Sigmoid colon (tissue), 7 donors: ENCODE measurements at regions of chr11 and their contacts with region 1.

Region 1: GRCh38 chr11:1837171-1838076 is 1.4 kb upstream of the TNNI2 start:
- DNase-seq: peak; percentile 82
- H3K4me3 ChIP-seq: no peak overlapping the region
- H3K27ac ChIP-seq: no peak overlapping the region
- H3K4me1 ChIP-seq: peaks cover 0 to 12% (median 11%) of the 10 kb centered on the region in 4 donors
- H3K27me3 ChIP-seq: no peaks in the 10 kb centered on the region
- CTCF ChIP-seq: peak; percentile 85 to 91 (median 86)
- EP300 ChIP-seq: no peak
- POLR2A ChIP-seq: no peak

Region 2: GRCh38 chr11:1792461-1792860 is 45.0 kb before region 1 on chr11:
- intact Hi-C with region 1: no loop called
- DNase-seq: no peak
- H3K4me3 ChIP-seq: no peak overlapping the region
- H3K27ac ChIP-seq: no peak overlapping the region
- H3K4me1 ChIP-seq: no peaks in the 10 kb centered on the region
- H3K27me3 ChIP-seq: peaks cover 0 to 17% (median 8%) of the 10 kb centered on the region in 3 donors
- CTCF ChIP-seq: no peak
- EP300 ChIP-seq: no peak
- POLR2A ChIP-seq: no peak

Region 3: GRCh38 chr11:1882519-1883238 is 45.3 kb after region 1 on chr11:
- intact Hi-C with region 1: loop called (anchors 5 kb)
- DNase-seq: peak; percentile 91
- H3K4me3 ChIP-seq: no peak overlapping the region
- H3K27ac ChIP-seq: peak overlapping the region in 3 of 4 donors; percentile 65 to 78 (median 66)
- H3K4me1 ChIP-seq: peaks cover 0 to 31% (median 27%) of the 10 kb centered on the region in 4 donors
- H3K27me3 ChIP-seq: no peaks in the 10 kb centered on the region
- CTCF ChIP-seq: peak; percentile 65 to 86 (median 74)
- EP300 ChIP-seq: no peak
- POLR2A ChIP-seq: no peak

Region 4: DNA sequence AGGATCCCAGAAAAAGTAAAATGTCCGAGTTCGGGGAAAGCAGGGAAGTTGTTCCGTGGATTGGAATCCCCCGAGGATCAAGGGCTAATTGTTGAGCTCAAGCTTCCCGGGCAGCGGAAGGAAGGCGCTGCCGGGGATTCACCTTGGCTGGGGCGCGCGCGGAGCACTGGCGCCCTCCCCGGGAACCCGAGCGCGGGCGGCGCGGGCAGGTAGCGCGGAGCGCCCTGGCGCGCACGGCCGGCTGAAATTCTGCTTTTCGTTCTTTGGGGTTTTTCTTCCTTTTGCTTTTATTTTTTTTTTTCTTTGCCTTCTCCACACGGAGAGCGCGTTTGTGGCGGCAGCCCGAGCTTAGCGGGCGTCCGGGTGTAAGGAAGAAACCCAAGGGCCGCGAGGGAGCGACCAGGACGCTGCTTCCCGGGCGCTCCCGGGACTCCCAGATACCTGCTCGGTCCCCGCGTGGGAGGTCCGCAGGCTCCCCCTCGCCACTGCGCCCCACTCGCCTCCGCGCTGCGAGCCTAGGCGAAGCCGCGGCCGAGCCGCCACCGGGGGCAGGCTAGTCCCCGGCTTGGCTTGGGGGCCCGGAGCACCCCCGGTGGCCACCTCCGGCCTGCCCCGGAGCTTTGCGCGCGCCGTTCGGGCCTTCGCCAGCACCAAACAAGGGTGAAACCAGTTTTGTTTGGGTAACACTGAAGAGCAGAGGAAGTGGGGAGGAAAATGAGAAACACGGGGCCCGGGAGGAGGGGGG is 306.5 kb after region 1 on chr11:
- intact Hi-C with region 1: no loop called
- DNase-seq: no peak
- H3K4me3 ChIP-seq: no peak overlapping the region
- H3K27ac ChIP-seq: no peak overlapping the region
- H3K4me1 ChIP-seq: peaks cover 0 to 25% (median 16%) of the 10 kb centered on the region in 4 donors
- H3K27me3 ChIP-seq: peaks cover 65 to 99% (median 90%) of the 10 kb centered on the region in 3 donors
- CTCF ChIP-seq: no peak
- EP300 ChIP-seq: no peak
- POLR2A ChIP-seq: no peak